ENCODE measurements at regions of chrX and their contacts with region 1.

Region 1: GRCh38 chrX:16670998-16671397 is 21.0 kb downstream of the S100G start:
- DNase-seq: peak; percentile 27
- ATAC-seq: no peak
- H3K4me3 Mint-ChIP-seq: no peak overlapping the region
- H3K27ac Mint-ChIP-seq: no peak overlapping the region
- H3K4me1 Mint-ChIP-seq: no peaks in the 10 kb centered on the region
- H3K27me3 Mint-ChIP-seq: no peaks in the 10 kb centered on the region

Region 2: DNA sequence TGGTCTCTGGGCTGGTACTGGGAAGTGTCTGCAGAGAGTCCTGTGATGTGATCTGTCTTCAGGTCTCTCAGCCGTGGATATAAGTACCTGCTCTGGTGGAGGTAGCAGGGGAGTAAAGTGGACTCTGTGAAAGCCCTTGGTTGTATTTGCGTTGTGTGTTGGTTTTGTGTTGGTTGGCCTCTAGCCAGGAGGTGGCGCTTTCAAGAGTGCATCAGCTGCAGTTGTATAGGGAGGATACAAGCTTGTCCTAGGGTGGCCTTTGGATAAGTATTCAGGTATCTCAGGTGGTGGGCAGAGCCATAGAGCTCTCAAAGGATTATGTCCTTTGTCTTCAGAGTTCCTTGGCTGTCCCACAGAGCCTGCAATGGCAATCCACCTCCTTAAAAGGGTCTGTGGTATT is 392.1 kb before region 1 on chrX:
- CTCF ChIA-PET with region 1: no interaction called
- POLR2A ChIA-PET with region 1: no interaction called
- intact Hi-C with region 1: loop called in 1 of 2 experiments (anchors 5 kb)
- DNase-seq: peak; percentile 21
- ATAC-seq: no peak
- H3K4me3 Mint-ChIP-seq: no peak overlapping the region
- H3K27ac Mint-ChIP-seq: no peak overlapping the region
- H3K4me1 Mint-ChIP-seq: no peaks in the 10 kb centered on the region
- H3K27me3 Mint-ChIP-seq: peaks cover 5% of the 10 kb centered on the region

Region 3: GRCh38 chrX:16528620-16529019 is 142.4 kb before region 1 on chrX:
- CTCF ChIA-PET with region 1: no interaction called
- POLR2A ChIA-PET with region 1: no interaction called
- intact Hi-C with region 1: no loop called
- DNase-seq: peak; percentile 62
- ATAC-seq: peak; percentile 88
- H3K4me3 Mint-ChIP-seq: peak overlapping the region; percentile 16
- H3K27ac Mint-ChIP-seq: peak overlapping the region; percentile 87
- H3K4me1 Mint-ChIP-seq: peaks cover 29% of the 10 kb centered on the region
- H3K27me3 Mint-ChIP-seq: no peaks in the 10 kb centered on the region